HEK293T (cell line): ENCODE measurements at regions of chr1 and their contacts with region 1.

Region 1: DNA sequence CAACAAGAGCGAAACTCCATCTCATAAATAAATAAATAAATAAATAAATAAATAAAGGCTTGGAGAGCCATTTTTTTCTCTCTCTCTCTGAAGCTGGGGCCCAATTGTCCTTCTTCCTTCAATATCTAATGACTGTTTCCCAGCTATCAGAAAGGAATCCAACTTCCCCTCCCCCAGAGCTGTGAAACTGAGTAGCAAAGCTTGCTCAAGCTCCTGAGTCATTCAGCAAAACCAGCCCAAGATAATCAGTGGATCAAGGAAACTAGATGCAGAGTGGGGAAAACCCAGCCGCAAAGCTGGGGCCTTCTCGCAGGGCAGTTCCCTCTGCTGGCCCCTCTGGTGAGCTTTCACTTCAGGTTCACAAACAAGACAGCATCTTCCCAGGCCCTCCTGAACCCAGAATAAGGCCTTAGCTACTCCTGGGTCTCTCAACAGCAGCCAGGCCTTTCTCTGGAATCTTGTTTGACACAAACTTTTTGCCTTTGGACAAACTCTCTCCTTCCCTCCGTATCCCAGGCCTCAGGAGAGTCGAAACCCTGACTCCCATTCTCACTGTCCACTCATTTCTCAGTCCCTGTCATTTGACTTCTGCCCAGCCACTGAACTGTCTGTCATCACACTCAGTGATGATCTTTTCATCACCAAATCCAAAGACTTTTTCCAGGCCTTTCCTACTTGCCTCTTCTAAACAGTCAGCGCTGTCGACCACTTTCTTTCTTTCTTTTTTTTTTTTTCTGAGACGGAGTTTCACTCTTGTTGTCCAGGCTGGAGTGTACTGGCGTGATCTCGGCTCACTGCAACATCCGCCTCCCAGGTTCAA is 18.0 kb upstream of the PTP4A2 start:
- DNase-seq: no peak

Region 2: GRCh38 chr1:31644560-31645273 is 311.4 kb before region 1 on chr1 and contains the start of gene PEF1:
- CTCF ChIA-PET with region 1: no interaction called
- POLR2A ChIA-PET with region 1: no interaction called
- DNase-seq: peak; percentile 100

Region 3: GRCh38 chr1:31938174-31938950 is 17.8 kb before region 1 on chr1 and contains the start of gene PTP4A2:
- CTCF ChIA-PET with region 1: interaction called, 14 read pairs
- POLR2A ChIA-PET with region 1: interaction called, 15 read pairs
- DNase-seq: peak; percentile 100

Region 4: GRCh38 chr1:31944205-31945089 is 11.7 kb before region 1 on chr1:
- CTCF ChIA-PET with region 1: interaction called, 14 read pairs
- POLR2A ChIA-PET with region 1: interaction called, 32 read pairs
- DNase-seq: peak; percentile 88

Region 5: GRCh38 chr1:32063261-32063681 is 107.1 kb after region 1 on chr1:
- CTCF ChIA-PET with region 1: no interaction called
- POLR2A ChIA-PET with region 1: no interaction called
- DNase-seq: peak; percentile 76